ENCODE measurements at regions of chr11 and their contacts with region 1.

Region 1: GRCh38 chr11:121194731-121195596 is 93.9 kb downstream of the TECTA start:
- DNase-seq: peak; percentile 64
- H3K4me3 ChIP-seq: peak overlapping the region in 1 of 3 experiments; percentile 22
- H3K27ac ChIP-seq: no peak overlapping the region
- H3K4me1 ChIP-seq: peaks cover 5% of the 10 kb centered on the region
- H3K27me3 ChIP-seq: no peaks in the 10 kb centered on the region
- CTCF ChIP-seq: peak; percentile 68 to 76
- POLR2A ChIP-seq: no peak

Region 2: GRCh38 chr11:120929664-120930154 is 265.3 kb before region 1 on chr11:
- CTCF ChIA-PET with region 1: interaction called, 24 read pairs
- POLR2A ChIA-PET with region 1: no interaction called
- dilution Hi-C with region 1: no loop called
- intact Hi-C with region 1: loop called (anchors 1 kb)
- DNase-seq: peak; percentile 40
- H3K4me3 ChIP-seq: no peak overlapping the region
- H3K27ac ChIP-seq: no peak overlapping the region
- H3K4me1 ChIP-seq: no peaks in the 10 kb centered on the region
- H3K27me3 ChIP-seq: no peaks in the 10 kb centered on the region
- CTCF ChIP-seq: peak; percentile 67 to 80
- POLR2A ChIP-seq: no peak

Region 3: DNA sequence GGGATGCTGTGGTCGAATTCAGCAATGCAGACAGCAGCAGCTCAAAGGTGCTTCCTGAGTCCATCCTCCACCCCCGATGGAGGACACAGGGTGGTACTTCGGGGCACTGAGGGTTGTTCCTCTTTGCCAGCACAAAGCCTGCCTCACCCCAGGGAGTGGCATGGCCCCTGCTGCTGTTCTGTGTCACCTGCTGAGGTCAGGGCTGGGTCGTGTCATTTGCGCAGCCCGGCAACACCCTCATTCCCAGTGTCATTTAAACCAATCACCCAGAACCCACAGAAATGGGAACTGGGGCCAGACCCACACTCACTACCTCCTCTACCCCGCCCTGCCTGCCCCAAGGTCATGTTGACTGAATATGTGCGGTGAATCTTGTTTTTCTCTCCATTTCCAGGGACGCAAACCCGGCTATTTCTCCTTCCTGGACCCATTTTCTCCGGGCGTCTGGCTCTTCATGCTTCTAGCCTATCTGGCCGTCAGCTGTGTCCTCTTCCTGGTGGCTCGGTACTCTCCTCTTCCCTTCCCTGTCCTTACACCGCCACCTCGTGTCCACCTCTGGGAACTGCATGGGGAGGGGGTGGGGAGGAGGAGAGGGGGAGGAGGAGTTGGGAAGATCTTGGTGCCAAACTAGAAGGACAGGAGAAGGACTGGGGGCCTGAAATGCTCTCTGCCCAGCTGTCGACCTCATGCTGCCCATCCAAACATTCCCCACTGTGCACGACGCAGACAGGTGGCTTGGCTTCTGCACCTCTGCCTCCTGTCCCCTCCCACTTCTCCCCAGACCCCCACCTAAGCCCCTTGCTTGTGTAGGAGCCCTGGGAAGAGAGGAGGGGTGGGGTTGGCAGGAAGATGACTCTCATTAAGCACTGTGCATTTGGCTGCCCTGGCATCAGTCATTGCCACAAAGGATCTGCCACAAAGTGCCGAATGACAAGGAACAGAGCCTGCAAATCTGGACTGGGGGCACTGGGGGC is 242.2 kb before region 1 on chr11:
- CTCF ChIA-PET with region 1: interaction called, 13 read pairs
- POLR2A ChIA-PET with region 1: no interaction called
- dilution Hi-C with region 1: no loop called
- intact Hi-C with region 1: no loop called
- DNase-seq: peak; percentile 65
- H3K4me3 ChIP-seq: no peak overlapping the region
- H3K27ac ChIP-seq: no peak overlapping the region
- H3K4me1 ChIP-seq: no peaks in the 10 kb centered on the region
- H3K27me3 ChIP-seq: no peaks in the 10 kb centered on the region
- CTCF ChIP-seq: peak; percentile 39 to 77
- POLR2A ChIP-seq: no peak

Region 4: DNA sequence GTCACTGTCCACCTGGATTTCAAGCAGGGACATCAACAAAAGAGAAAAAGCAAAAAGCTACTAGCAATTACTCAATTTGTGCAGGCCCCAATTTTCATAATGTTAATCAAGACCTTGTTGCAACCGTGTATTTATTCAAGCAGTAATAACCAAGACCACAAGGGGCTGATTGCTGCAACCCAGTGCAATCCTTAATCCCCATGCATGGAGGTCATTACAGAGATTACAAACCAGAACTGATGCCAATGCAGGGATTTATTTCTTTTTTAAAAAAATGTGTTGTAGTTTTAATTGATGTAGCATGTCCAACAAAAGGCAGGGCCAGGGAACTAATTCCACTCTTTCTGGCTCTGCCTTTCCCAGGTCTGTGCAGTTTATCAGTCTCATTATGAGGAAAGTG is 75.5 kb before region 1 on chr11:
- CTCF ChIA-PET with region 1: interaction called, 9 read pairs
- POLR2A ChIA-PET with region 1: no interaction called
- dilution Hi-C with region 1: no loop called
- intact Hi-C with region 1: loop called (anchors 5 kb)
- DNase-seq: no peak
- H3K4me3 ChIP-seq: no peak overlapping the region
- H3K27ac ChIP-seq: no peak overlapping the region
- H3K4me1 ChIP-seq: peaks cover 14% of the 10 kb centered on the region
- H3K27me3 ChIP-seq: no peaks in the 10 kb centered on the region
- CTCF ChIP-seq: peak in 1 of 2 donors; percentile 4
- POLR2A ChIP-seq: no peak

Region 5: DNA sequence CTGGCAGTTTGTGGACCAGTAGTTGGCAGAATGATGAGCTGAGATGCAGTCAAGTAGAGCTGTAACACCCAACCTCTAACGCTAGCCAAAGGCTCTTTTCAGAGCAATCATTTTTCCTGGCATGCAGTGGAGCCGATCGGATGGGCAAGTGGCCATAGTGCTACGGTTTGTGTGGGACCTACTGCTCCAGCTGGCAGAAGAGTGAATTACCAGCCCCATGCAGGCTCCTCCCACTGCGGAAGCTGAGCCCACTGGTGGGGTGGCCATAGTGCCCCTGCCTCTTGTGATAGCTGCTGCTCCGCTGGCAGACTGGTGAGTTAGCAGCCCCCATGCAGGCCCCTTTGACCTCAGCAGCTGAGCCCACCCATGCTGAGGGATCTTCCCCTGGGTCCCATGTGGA is 70.6 kb after region 1 on chr11:
- CTCF ChIA-PET with region 1: no interaction called
- POLR2A ChIA-PET with region 1: no interaction called
- dilution Hi-C with region 1: no loop called
- intact Hi-C with region 1: no loop called
- DNase-seq: no peak
- H3K4me3 ChIP-seq: no peak overlapping the region
- H3K27ac ChIP-seq: no peak overlapping the region
- H3K4me1 ChIP-seq: no peaks in the 10 kb centered on the region
- H3K27me3 ChIP-seq: peaks cover 0 to 10% of the 10 kb centered on the region in 2 experiments
- CTCF ChIP-seq: no peak
- POLR2A ChIP-seq: no peak

Measured in endothelial cell of umbilical vein (primary cell).